ENCODE measurements at regions of chr3 and their contacts with region 1.

Region 1: GRCh38 chr3:100044369-100044768 is 69.9 kb downstream of the FILIP1L start:
- DNase-seq: no peak
- H3K4me3 ChIP-seq: no peak overlapping the region
- H3K27ac ChIP-seq: peak overlapping the region; percentile 20 to 92 (median 89)
- H3K4me1 ChIP-seq: peaks cover 0 to 69% (median 61%) of the 10 kb centered on the region in 4 donors
- H3K27me3 ChIP-seq: no peaks in the 10 kb centered on the region
- CTCF ChIP-seq: no peak
- EP300 ChIP-seq: peak in 1 of 4 donors; percentile 16
- POLR2A ChIP-seq: no peak

Region 2: DNA sequence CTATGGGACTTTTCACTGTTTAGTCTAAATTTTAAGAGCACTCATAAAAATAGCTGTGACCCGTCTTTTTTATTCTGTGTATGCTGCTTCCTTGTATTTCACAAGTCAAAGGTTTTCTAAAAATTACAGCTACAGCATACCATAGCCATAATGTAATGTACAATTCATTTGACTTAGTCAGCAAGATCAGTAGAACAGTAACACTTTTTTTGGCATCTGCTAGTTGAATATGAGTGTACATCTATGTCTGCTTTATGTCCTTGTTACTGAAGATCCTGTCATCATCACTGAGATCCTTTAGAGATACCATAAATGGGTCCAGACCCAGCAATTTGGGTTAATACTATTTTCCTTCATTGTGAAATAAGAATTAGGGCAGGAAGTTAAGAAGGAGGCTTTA is 184.5 kb before region 1 on chr3:
- intact Hi-C with region 1: loop called (anchors 5 kb)
- DNase-seq: no peak
- H3K4me3 ChIP-seq: no peak overlapping the region
- H3K27ac ChIP-seq: peak overlapping the region; percentile 68 to 95 (median 92)
- H3K4me1 ChIP-seq: peaks cover 0 to 96% (median 82%) of the 10 kb centered on the region in 4 donors
- H3K27me3 ChIP-seq: no peaks in the 10 kb centered on the region
- CTCF ChIP-seq: no peak
- EP300 ChIP-seq: peak in 2 of 4 donors; percentile 34 to 54
- POLR2A ChIP-seq: no peak

Region 3: DNA sequence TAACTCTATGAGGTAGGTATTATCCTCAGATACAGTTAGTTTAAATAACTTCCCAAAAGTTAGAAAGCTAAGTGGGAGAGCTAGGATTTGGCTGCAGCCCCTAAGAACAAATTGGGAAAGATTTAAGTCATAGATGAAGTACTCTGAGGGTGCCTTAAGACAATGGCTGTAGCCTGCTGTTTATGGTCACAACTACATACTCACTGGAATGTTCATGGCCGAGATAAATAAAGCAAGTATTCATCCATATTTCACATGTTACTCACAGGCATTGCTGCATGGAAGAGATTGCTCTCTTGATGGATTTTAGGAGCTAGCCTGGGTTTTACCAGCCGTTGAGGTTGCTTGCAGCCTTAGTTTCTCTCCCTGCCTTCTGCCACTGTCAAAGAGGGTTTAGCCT is 81.7 kb before region 1 on chr3:
- intact Hi-C with region 1: loop called (anchors 5 kb)
- DNase-seq: no peak
- H3K4me3 ChIP-seq: no peak overlapping the region
- H3K27ac ChIP-seq: peak overlapping the region in 3 of 4 donors; percentile 21 to 83 (median 69)
- H3K4me1 ChIP-seq: peaks cover 0 to 80% (median 43%) of the 10 kb centered on the region in 4 donors
- H3K27me3 ChIP-seq: no peaks in the 10 kb centered on the region
- CTCF ChIP-seq: no peak
- EP300 ChIP-seq: no peak
- POLR2A ChIP-seq: no peak

Measured in sigmoid colon (tissue), 7 donors.